Sciatic nerve (tissue), 2 donors: ENCODE measurements at regions of chr1 and their contacts with region 1.

Region 1: GRCh38 chr1:65658122-65658521 is 134.6 kb upstream of the PDE4B start:
- DNase-seq: no peak
- ATAC-seq: no peak

Region 2: GRCh38 chr1:63799820-63800219 is 1858.3 kb before region 1 on chr1:
- intact Hi-C with region 1: loop called (anchors 10 kb)
- DNase-seq: peak; percentile 68
- ATAC-seq: peak; percentile 37